Transverse colon (tissue), 4 donors: ENCODE measurements at regions of chr10 and their contacts with region 1.

Region 1: GRCh38 chr10:97037365-97038361 is 148.1 kb downstream of the SLIT1 start:
- DNase-seq: peak; percentile 83
- H3K4me3 ChIP-seq: peak overlapping the region; percentile 3 to 55 (median 33)
- H3K27ac ChIP-seq: peak overlapping the region in 1 of 4 donors; percentile 28
- H3K4me1 ChIP-seq: peaks cover 0 to 12% (median 4%) of the 10 kb centered on the region in 4 donors
- H3K27me3 ChIP-seq: peaks cover 14% of the 10 kb centered on the region
- CTCF ChIP-seq: peak; percentile 81 to 87 (median 85)
- EP300 ChIP-seq: no peak
- POLR2A ChIP-seq: no peak

Region 2: GRCh38 chr10:96416643-96417042 is 621.0 kb before region 1 on chr10:
- in situ Hi-C with region 1: loop called in 2 of 4 experiments (anchors 25 kb)
- intact Hi-C with region 1: no loop called
- DNase-seq: peak; percentile 36
- H3K4me3 ChIP-seq: no peak overlapping the region
- H3K27ac ChIP-seq: peak overlapping the region in 2 of 4 donors; percentile 3 to 55
- H3K4me1 ChIP-seq: peaks cover 4 to 8% (median 5%) of the 10 kb centered on the region in 4 donors
- H3K27me3 ChIP-seq: peaks cover 10% of the 10 kb centered on the region
- CTCF ChIP-seq: no peak
- EP300 ChIP-seq: no peak
- POLR2A ChIP-seq: no peak

Region 3: DNA sequence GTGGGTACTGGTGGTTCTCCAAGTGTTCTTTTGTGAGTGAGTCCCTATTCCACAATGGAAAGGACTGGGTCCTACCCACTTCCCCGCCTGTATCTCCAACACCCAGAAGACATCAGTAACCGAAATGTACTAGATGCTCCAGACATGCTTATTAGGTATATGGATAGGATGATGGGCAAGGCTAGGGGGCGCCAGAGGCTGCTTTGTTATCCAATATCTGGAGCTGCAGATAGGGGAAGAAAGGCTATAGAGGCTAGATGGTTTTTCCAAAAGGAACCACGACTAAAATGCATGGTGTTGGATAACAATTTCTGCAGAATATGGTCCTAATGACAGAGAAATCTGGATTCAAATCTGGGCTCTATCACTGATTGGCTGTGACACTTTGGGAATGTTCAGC is 394.7 kb before region 1 on chr10:
- in situ Hi-C with region 1: loop called in 1 of 4 experiments (anchors 10 kb)
- intact Hi-C with region 1: no loop called
- DNase-seq: peak; percentile 80
- H3K4me3 ChIP-seq: no peak overlapping the region
- H3K27ac ChIP-seq: no peak overlapping the region
- H3K4me1 ChIP-seq: peaks cover 0 to 17% (median 0%) of the 10 kb centered on the region in 4 donors
- H3K27me3 ChIP-seq: no peaks in the 10 kb centered on the region
- CTCF ChIP-seq: peak; percentile 43 to 56 (median 53)
- EP300 ChIP-seq: no peak
- POLR2A ChIP-seq: no peak

Region 4: DNA sequence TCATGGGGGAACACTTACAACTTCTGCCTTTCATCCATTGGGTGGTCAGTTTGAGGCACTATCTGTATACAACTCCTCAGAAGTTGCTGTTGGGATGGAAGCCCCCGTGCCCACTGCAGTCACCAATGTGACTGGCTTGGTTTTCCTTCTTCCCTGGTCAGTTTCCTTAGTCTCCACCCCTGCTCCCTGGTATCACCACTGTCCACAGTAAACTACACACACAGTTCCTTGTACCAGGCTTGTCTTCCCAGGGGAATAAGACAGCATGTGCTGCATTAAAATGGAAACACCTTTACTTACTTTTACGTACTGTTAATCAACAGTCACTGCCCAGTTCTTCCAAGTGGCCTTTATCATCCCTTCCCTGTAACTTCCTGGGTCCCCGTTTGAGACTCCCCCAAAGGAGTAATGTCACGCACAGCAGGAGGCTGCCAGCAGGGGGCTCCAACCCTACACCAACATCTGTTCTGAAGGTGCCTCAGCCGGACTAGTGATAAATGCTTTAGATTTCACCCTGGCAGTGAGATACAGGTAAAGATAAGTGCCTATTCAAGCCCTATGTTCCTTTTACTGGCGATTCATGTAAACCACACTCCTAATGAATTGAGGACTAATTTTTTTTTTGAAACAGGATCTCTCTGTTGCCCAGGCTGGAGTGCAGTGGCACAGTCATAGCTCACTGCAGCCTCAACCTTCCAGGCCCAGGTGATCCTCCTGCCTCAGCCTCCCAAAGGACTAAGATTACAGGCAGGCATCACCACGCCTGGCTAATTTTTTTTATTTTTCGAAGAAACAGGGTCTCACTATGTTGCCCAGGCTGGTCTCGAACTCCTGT is 272.0 kb before region 1 on chr10:
- in situ Hi-C with region 1: loop called in 1 of 4 experiments (anchors 25 kb)
- intact Hi-C with region 1: no loop called
- DNase-seq: peak; percentile 86
- H3K4me3 ChIP-seq: no peak overlapping the region
- H3K27ac ChIP-seq: peak overlapping the region; percentile 44 to 79 (median 66)
- H3K4me1 ChIP-seq: peaks cover 3 to 14% (median 13%) of the 10 kb centered on the region in 4 donors
- H3K27me3 ChIP-seq: no peaks in the 10 kb centered on the region
- CTCF ChIP-seq: peak; percentile 85 to 93 (median 89)
- EP300 ChIP-seq: no peak
- POLR2A ChIP-seq: no peak